ENCODE measurements at regions of chr4 and their contacts with region 1.

Region 1: GRCh38 chr4:129218360-129218759 is 122.4 kb downstream of the C4orf33 start:
- DNase-seq: peak; percentile 24
- H3K4me3 Mint-ChIP-seq: no peak overlapping the region
- H3K27ac Mint-ChIP-seq: no peak overlapping the region
- H3K4me1 Mint-ChIP-seq: no peaks in the 10 kb centered on the region
- H3K27me3 Mint-ChIP-seq: no peaks in the 10 kb centered on the region
- CTCF ChIP-seq: no peak

Region 2: DNA sequence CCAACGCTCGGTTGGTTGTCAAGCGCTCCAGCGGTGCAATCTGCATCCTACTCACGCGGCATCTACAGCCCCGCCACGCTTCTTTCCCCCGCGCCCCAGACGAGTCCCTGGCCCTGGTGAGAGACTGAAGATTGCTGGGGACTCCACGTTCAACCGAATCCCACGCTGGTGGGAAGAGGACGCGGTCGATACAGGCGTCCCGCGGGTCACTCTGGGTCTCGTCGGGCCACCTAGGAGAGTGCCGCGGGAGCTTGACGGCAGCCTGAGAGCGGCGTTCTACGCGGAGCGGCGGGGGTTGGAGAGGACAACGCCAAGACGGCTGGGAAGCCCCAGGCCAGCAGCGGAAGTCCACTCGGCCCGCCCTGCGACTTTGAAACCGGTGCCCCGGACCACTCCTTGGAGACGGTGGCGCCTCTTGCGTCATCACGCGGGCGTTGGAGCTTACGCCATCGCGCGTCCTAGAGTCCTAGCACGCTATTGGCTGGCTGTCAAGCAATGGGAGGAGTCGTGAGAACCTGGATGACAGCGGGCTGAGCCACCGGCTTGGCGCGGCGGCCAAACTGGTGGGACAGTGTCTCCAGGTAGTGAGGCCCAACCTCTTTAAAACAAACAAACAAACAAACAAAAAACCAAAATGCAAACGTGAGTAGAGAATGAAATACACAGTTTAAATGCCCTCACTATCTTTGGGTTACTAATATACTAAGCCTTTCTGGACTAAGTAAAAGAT is 125.0 kb before region 1 on chr4 and contains the start of gene SCLT1:
- CTCF ChIA-PET with region 1: no interaction called
- intact Hi-C with region 1: no loop called
- DNase-seq: peak; percentile 94
- H3K4me3 Mint-ChIP-seq: no peak within 1 kb of the TSS
- H3K27ac Mint-ChIP-seq: no peak within 1 kb of the TSS
- H3K4me1 Mint-ChIP-seq: peaks cover 9% of the 10 kb centered on the region
- H3K27me3 Mint-ChIP-seq: no peaks in the 10 kb centered on the region
- CTCF ChIP-seq: no peak
- total RNA-seq, gene SCLT1: 19.6 and 21.4 TPM in 2 replicates

Region 3: DNA sequence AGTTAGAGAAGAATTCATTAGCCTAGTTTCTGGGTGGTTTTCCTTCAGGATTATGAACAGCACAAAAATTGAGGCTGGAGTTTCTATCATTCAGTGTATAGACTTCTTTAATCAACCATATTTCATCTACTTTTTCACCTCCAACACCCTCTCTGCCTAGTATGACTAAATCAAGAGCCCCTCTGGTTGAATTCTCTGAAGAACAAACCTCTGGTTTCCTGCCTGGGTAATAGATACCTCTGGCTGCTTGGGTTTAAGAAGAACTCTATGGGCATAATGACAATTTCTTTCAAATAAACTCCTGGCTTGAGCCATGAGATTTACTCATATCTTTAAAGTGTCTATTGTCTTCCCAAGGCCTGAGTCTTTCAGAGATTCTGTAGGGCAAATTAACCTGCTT is 55.9 kb before region 1 on chr4:
- CTCF ChIA-PET with region 1: no interaction called
- intact Hi-C with region 1: no loop called
- DNase-seq: no peak
- H3K4me3 Mint-ChIP-seq: no peak overlapping the region
- H3K27ac Mint-ChIP-seq: no peak overlapping the region
- H3K4me1 Mint-ChIP-seq: no peaks in the 10 kb centered on the region
- H3K27me3 Mint-ChIP-seq: no peaks in the 10 kb centered on the region
- CTCF ChIP-seq: no peak

Region 4: DNA sequence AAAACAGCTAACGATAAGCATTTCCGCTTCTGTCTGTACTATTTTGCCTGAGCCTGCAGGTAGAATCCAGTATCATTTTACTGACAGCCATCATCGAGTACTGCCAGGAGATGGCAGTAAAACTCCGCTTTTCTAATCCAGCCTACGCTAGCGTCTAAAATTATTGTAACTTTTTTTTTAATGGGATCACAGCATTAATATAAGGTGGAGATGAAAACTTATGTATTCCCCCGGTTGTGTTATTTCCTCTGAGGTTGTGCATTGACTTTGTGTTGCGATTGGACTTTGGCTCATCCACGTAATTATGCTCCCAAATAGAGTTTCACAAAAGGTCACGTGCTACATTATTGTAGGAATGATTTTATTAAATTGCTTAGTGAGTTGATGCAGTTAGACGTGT is 125.7 kb after region 1 on chr4:
- CTCF ChIA-PET with region 1: no interaction called
- intact Hi-C with region 1: loop called (anchors 2 kb)
- DNase-seq: peak; percentile 29
- H3K4me3 Mint-ChIP-seq: peak overlapping the region; percentile 31
- H3K27ac Mint-ChIP-seq: no peak overlapping the region
- H3K4me1 Mint-ChIP-seq: peaks cover 8% of the 10 kb centered on the region
- H3K27me3 Mint-ChIP-seq: no peaks in the 10 kb centered on the region
- CTCF ChIP-seq: no peak

Region 5: GRCh38 chr4:129355516-129355915 is 137.2 kb after region 1 on chr4:
- CTCF ChIA-PET with region 1: no interaction called
- intact Hi-C with region 1: loop called (anchors 1 kb)
- DNase-seq: no peak
- H3K4me3 Mint-ChIP-seq: no peak overlapping the region
- H3K27ac Mint-ChIP-seq: no peak overlapping the region
- H3K4me1 Mint-ChIP-seq: peaks cover 19% of the 10 kb centered on the region
- H3K27me3 Mint-ChIP-seq: peaks cover 9% of the 10 kb centered on the region
- CTCF ChIP-seq: no peak